Ascending aorta (tissue), 2 donors: ENCODE measurements at regions of chr10 and their contacts with region 1.

Region 1: DNA sequence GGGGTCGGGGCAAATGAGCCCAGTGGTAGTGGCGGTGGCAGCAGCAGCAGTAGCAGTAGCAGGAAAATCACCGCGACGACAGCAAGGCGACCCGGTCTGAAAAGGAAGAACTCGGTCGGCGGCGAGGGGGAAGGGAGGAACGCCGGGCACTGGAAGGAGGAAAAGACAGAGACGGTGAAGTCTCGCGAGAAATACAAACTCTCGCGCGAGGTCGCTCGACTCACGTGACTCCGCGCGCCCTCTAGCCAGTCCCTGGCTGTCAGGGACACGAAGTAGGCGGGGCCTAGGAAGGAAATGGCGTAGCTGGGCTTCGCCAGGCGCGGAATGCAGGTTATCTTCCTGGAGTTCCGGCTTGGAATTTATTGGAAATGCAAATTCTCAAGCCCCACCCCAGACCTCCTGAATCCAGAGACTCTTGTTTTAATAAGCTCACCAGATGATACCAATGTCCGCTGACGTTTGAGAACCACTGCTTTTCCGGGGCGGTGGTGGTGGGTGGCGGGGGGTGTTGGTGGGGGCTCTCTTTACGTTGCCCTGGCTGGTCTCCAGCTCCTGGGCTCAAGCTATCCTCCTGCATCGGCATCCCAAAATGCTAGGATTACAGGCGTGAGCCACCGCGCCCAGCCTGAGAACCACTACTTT is at the start of gene SMNDC1:
- DNase-seq: peak; percentile 90 to 99
- H3K4me3 ChIP-seq: peak within 1 kb of the TSS; percentile 75 to 99
- H3K27ac ChIP-seq: peak within 1 kb of the TSS; percentile 95 to 96
- H3K4me1 ChIP-seq: peaks cover 5 to 36% of the 10 kb centered on the region in 2 donors
- H3K27me3 ChIP-seq: no peaks in the 10 kb centered on the region
- CTCF ChIP-seq: no peak
- total RNA-seq, gene SMNDC1: 6.9 TPM

Region 2: GRCh38 chr10:110567201-110568054 is 262.5 kb after region 1 on chr10 and contains the start of gene SMC3:
- intact Hi-C with region 1: loop called (anchors 5 kb)
- DNase-seq: peak; percentile 40 to 94
- H3K4me3 ChIP-seq: peak within 1 kb of the TSS; percentile 81 to 97
- H3K27ac ChIP-seq: peak within 1 kb of the TSS; percentile 84 to 85
- H3K4me1 ChIP-seq: peaks cover 0 to 10% of the 10 kb centered on the region in 2 donors
- H3K27me3 ChIP-seq: no peaks in the 10 kb centered on the region
- CTCF ChIP-seq: no peak
- total RNA-seq, gene SMC3: 14.8 TPM